Calu3 (cell line): ENCODE measurements at regions of chr5 and their contacts with region 1.

Region 1: GRCh38 chr5:112958093-112959088 is 18.2 kb upstream of the DCP2 start:
- DNase-seq: peak; percentile 61
- H3K4me3 Mint-ChIP-seq: no peak overlapping the region
- H3K27ac Mint-ChIP-seq: peak overlapping the region; percentile 34
- H3K4me1 Mint-ChIP-seq: peaks cover 44% of the 10 kb centered on the region
- H3K27me3 Mint-ChIP-seq: no peaks in the 10 kb centered on the region
- CTCF ChIP-seq: no peak

Region 2: GRCh38 chr5:112921833-112922817 is 36.3 kb before region 1 on chr5 and contains the start of gene REEP5:
- CTCF ChIA-PET with region 1: interaction called, 5 read pairs
- intact Hi-C with region 1: loop called (anchors 2 kb)
- DNase-seq: peak; percentile 93
- H3K4me3 Mint-ChIP-seq: peak within 1 kb of the TSS; percentile 100
- H3K27ac Mint-ChIP-seq: peak within 1 kb of the TSS; percentile 81
- H3K4me1 Mint-ChIP-seq: peaks cover 31% of the 10 kb centered on the region
- H3K27me3 Mint-ChIP-seq: no peaks in the 10 kb centered on the region
- CTCF ChIP-seq: peak; percentile 83
- total RNA-seq, gene REEP5: 123 and 130 TPM in 2 replicates